ENCODE measurements at regions of chr5 and their contacts with region 1.

Region 1: GRCh38 chr5:54703133-54703532 is 185.6 kb downstream of the SNX18 start:
- DNase-seq: peak in 1 of 2 donors; percentile 88
- H3K4me3 ChIP-seq: peak overlapping the region; percentile 31 to 50
- H3K27ac ChIP-seq: peak overlapping the region; percentile 76 to 88
- H3K4me1 ChIP-seq: peaks cover 6 to 54% of the 10 kb centered on the region in 2 donors
- H3K27me3 ChIP-seq: no peaks in the 10 kb centered on the region
- CTCF ChIP-seq: no peak

Region 2: GRCh38 chr5:54531546-54531945 is 171.6 kb before region 1 on chr5:
- intact Hi-C with region 1: no loop called
- DNase-seq: no peak
- H3K4me3 ChIP-seq: peak overlapping the region; percentile 33 to 35
- H3K27ac ChIP-seq: peak overlapping the region; percentile 71 to 97
- H3K4me1 ChIP-seq: peaks cover 19 to 76% of the 10 kb centered on the region in 2 donors
- H3K27me3 ChIP-seq: no peaks in the 10 kb centered on the region
- CTCF ChIP-seq: no peak

Region 3: GRCh38 chr5:54541823-54542783 is 161.0 kb before region 1 on chr5:
- intact Hi-C with region 1: no loop called
- DNase-seq: no peak
- H3K4me3 ChIP-seq: peak overlapping the region; percentile 24 to 28
- H3K27ac ChIP-seq: peak overlapping the region; percentile 39 to 62
- H3K4me1 ChIP-seq: peaks cover 0 to 46% of the 10 kb centered on the region in 2 donors
- H3K27me3 ChIP-seq: no peaks in the 10 kb centered on the region
- CTCF ChIP-seq: no peak

Region 4: DNA sequence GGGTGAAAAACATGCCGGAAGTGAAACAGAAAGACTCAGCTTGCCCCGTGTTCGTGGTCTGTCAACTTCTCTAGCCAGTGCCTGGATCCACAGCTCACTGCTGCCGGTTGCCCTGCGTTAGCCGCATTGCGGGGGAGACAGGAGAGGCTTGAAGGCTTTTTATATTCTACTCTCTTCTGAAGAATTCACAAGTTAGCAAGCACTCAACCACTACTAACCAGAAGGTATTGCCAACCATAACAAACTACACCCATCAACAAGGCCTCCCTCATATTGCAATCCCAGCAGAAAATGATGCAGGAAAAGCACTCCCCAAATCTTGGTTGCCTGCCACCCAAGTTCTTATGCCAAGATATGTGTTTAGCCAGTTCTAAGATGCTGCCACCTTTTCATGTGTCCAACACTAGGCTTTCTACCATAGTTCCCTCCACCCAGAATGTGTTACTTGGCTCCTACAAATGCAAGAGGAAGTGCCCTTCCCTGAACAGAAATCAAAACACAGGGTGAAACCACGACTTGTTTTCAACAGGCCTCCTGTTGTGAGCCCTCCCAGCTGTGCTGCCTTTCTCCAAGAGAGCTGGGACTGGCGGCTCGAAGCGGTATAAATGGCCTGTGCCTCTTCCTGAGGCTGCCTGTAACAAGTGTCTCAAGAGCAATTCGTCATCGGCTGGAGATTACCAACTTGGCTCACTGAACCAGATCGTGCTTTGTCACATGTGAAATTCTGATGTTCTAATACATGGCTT is 56.6 kb before region 1 on chr5:
- intact Hi-C with region 1: loop called (anchors 5 kb)
- DNase-seq: peak; percentile 77 to 94
- H3K4me3 ChIP-seq: peak overlapping the region; percentile 34 to 55
- H3K27ac ChIP-seq: peak overlapping the region; percentile 89 to 93
- H3K4me1 ChIP-seq: peaks cover 17 to 50% of the 10 kb centered on the region in 2 donors
- H3K27me3 ChIP-seq: no peaks in the 10 kb centered on the region
- CTCF ChIP-seq: peak in 1 of 3 experiments; percentile 7

Region 5: GRCh38 chr5:54719384-54720283 is 16.5 kb after region 1 on chr5:
- intact Hi-C with region 1: loop called (anchors 2 kb)
- DNase-seq: peak in 1 of 2 donors; percentile 85
- H3K4me3 ChIP-seq: peak overlapping the region; percentile 3 to 22
- H3K27ac ChIP-seq: peak overlapping the region; percentile 84 to 86
- H3K4me1 ChIP-seq: peaks cover 13 to 46% of the 10 kb centered on the region in 2 donors
- H3K27me3 ChIP-seq: no peaks in the 10 kb centered on the region
- CTCF ChIP-seq: no peak

Region 6: DNA sequence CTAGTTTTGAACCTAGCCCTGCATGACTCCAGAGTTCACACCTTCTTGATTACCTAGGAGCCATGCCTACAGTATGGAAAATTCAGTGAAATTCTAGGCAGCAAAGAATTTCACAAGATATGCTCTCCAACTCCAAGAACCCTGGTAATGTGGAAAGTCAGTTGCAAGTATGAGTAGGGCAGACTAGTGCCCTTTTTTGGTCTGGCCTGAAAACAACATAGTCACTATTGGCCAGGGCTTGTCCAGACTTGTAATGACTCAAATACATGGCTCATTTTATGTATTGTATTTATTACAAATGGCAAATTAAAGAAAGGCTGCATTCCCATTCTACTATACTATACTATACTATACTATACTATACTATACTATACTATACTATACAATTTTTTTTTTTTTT is 121.9 kb after region 1 on chr5:
- intact Hi-C with region 1: loop called (anchors 5 kb)
- DNase-seq: peak in 1 of 2 donors; percentile 72
- H3K4me3 ChIP-seq: no peak overlapping the region
- H3K27ac ChIP-seq: peak overlapping the region; percentile 56 to 82
- H3K4me1 ChIP-seq: peaks cover 0 to 24% of the 10 kb centered on the region in 2 donors
- H3K27me3 ChIP-seq: no peaks in the 10 kb centered on the region
- CTCF ChIP-seq: no peak

Region 7: GRCh38 chr5:54927097-54927746 is 224.1 kb after region 1 on chr5:
- intact Hi-C with region 1: no loop called
- DNase-seq: no peak
- H3K4me3 ChIP-seq: no peak overlapping the region
- H3K27ac ChIP-seq: no peak overlapping the region
- H3K4me1 ChIP-seq: no peaks in the 10 kb centered on the region
- H3K27me3 ChIP-seq: no peaks in the 10 kb centered on the region
- CTCF ChIP-seq: no peak

Measured in ascending aorta (tissue), 2 donors.